B cell (primary cell): ENCODE measurements at regions of chr17 and their contacts with region 1.

Region 1: DNA sequence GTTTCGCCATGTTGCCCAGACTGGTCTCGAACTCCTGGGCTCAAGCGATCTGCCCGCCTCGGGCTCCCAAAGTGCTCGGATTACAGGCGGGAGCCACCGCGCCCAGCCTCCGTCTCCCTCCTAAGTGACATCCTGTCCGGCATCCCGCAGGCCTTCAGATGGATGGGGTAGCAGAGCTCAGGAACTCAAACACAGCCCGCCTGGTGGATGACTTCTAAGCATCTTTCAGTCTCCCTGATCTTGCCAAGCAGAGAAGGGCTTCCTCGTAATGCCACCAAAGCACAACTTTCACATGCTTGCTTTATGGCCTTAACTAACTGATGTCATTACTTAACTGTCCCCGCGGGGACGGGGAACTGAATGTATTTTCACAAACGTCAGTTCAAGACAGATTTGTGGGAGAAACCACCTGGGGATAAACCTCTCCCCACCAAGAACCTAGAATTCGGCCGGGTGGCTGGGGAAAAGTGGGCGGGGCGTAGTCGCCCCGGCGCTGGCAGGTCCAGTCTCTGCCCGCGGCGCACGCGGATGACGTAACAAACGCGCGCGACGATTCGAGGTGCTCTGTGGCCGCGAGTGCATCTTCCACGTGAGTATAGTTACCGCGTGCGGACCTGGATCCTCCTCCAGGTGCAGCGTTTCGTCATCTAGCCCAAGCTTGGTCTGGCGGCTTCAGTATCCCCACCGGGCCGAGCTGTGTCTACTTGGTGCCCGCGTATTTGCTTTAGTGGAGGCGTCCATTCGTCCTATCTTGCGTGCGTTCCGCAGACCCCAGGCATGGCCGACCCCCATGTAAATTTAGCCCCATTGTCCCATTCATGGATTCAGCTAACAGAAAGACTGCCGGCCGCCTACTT is at the start of gene PFAS:
- DNase-seq: peak; percentile 98
- ATAC-seq: peak; percentile 48
- H3K4me3 ChIP-seq: peak within 1 kb of the TSS; percentile 65 to 100 (median 78)
- H3K4me3 Mint-ChIP-seq: peak within 1 kb of the TSS; percentile 96
- H3K27ac ChIP-seq: peak within 1 kb of the TSS; percentile 99 to 100
- H3K27ac Mint-ChIP-seq: peak within 1 kb of the TSS; percentile 100
- H3K4me1 ChIP-seq: peaks cover 29 to 37% of the 10 kb centered on the region in 2 donors
- H3K4me1 Mint-ChIP-seq: peaks cover 44% of the 10 kb centered on the region
- H3K27me3 ChIP-seq: no peaks in the 10 kb centered on the region
- H3K27me3 Mint-ChIP-seq: no peaks in the 10 kb centered on the region
- CTCF ChIP-seq: no peak
- total RNA-seq, gene PFAS: 65.5 and 66.4 TPM in 2 replicates

Region 2: DNA sequence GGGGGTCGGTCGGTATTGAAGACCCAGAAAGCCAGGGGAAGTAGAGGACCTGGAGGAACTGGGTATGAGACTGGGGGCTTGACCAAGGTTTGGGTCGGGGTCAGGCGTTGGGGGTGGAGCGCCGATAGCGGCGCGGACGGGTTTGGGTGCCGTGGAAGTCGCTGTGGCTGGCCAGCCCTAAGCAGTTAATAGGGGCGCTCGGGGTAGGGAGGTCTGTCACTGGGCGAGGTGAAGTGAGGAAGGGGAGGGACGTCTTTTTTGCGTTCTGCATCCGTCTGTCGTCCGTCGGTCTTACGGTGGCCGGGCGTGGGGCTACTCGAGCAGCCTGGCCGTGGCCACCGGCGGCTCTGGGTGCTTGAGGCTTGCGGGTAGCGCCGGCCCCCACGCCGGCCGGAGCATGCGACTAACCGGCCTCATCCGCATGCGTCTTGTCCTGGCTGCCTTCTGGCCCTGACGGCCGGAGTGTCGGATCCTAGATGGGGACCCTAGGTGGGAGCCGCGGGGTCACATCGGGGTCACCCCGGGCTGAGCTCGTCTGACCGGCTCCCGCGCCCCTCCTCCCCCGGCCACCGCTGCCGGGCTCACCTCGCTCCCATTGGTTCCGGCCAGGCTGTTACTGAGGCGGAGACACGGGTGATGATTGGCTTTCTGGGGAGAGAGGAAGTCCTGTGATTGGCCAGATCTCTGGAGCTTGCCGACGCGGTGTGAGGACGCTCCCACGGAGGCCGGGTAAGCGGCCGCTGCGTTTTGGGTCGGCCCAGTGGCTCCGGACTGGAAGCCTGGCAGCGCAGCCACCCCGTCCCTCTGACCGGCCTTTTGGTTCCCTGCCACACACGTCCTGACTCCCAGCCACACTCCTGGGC is 404.5 kb before region 1 on chr17:
- CTCF ChIA-PET with region 1: no interaction called
- POLR2A ChIA-PET with region 1: no interaction called
- intact Hi-C with region 1: loop called (anchors 2 kb)
- DNase-seq: peak; percentile 93
- ATAC-seq: peak; percentile 41
- H3K4me3 ChIP-seq: peak overlapping the region; percentile 67 to 95 (median 93)
- H3K4me3 Mint-ChIP-seq: peak overlapping the region; percentile 100
- H3K27ac ChIP-seq: peak overlapping the region; percentile 100
- H3K27ac Mint-ChIP-seq: peak overlapping the region; percentile 100
- H3K4me1 ChIP-seq: peaks cover 20 to 49% of the 10 kb centered on the region in 2 donors
- H3K4me1 Mint-ChIP-seq: peaks cover 39% of the 10 kb centered on the region
- H3K27me3 ChIP-seq: no peaks in the 10 kb centered on the region
- H3K27me3 Mint-ChIP-seq: no peaks in the 10 kb centered on the region
- CTCF ChIP-seq: no peak

Region 3: DNA sequence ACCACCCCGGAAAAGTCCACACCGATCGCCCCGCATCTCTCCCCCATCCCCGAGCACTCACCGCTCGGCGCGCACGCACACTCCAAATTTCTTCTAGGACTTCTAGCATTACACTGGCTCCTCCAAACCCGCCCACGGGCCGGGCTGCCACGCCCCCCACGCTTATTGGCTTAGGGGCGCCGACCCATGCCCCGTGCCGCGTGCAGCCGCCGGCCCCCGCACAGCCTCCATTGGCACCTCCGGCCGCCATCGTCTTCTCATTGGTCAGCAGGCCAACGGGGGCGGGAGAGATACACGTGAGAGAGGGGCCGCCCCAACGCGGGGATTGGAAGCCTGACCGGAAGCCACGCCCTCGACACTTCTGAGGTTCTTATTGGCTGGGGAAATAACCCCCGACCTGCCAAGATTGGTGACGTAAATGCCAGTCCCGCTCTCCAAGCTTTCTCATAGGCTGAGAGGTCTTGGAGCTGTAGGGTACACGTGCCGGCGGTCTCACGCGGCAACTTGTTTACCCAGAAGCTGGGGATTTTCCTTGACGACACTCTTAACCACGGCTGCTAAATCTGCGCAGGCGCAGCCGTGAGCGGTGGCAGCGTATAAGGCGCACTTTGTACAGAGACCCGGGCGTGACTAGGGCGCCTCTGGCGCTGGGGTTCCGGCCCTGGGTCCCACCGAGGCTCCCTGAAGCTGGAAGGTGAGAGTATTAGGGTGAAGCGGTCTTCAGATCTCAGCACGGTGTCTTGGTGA is 92.6 kb before region 1 on chr17:
- CTCF ChIA-PET with region 1: interaction called, 5 read pairs
- POLR2A ChIA-PET with region 1: interaction called, 9 read pairs
- intact Hi-C with region 1: loop called (anchors 1 kb)
- DNase-seq: peak; percentile 100
- ATAC-seq: peak; percentile 79
- H3K4me3 ChIP-seq: peak overlapping the region; percentile 69 to 96 (median 84)
- H3K4me3 Mint-ChIP-seq: no peak overlapping the region
- H3K27ac ChIP-seq: peak overlapping the region; percentile 98 to 100
- H3K27ac Mint-ChIP-seq: no peak overlapping the region
- H3K4me1 ChIP-seq: peaks cover 59 to 85% of the 10 kb centered on the region in 2 donors
- H3K4me1 Mint-ChIP-seq: peaks cover 50% of the 10 kb centered on the region
- H3K27me3 ChIP-seq: no peaks in the 10 kb centered on the region
- H3K27me3 Mint-ChIP-seq: no peaks in the 10 kb centered on the region
- CTCF ChIP-seq: no peak

Region 4: DNA sequence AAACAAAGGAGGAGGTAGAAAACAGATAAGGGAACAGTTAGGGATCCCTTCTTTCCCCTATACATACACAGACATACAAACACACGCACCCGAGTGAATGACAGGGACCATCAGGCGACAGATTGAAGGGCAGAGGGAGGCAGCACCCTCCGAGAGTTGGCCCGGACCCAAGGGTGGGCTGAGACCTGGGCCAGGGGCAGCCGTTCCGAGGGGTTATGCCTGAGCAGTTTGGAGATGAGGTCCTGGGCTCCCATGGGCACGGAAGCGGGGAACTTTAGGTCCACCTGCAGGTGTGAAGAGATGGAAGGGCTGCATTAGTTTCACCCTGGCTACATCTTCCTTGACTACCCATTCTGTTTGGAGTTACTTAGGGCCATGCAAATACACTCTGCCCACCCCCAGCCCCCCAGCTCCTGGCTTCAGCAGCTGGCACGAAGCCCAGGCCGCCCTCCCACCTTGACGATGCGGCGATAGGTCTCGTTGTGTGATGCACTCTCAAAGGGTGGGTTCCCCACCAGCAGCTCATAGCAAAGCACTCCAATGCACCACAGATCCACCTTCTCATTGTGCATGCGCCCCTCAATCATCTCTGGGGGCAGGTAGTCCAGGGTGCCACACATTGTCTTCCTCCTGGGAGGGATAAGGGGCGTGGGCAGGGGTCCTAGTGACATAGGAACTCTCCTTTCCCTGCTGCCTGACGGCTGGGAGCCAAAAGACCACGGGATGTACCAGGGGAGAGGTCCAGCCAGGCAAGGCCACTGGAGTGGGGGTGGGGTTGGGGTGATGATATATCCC is 44.0 kb before region 1 on chr17:
- CTCF ChIA-PET with region 1: interaction called, 4 read pairs
- POLR2A ChIA-PET with region 1: interaction called, 8 read pairs
- intact Hi-C with region 1: loop called (anchors 1 kb)
- DNase-seq: no peak
- ATAC-seq: no peak
- H3K4me3 ChIP-seq: no peak overlapping the region
- H3K4me3 Mint-ChIP-seq: no peak overlapping the region
- H3K27ac ChIP-seq: no peak overlapping the region
- H3K27ac Mint-ChIP-seq: no peak overlapping the region
- H3K4me1 ChIP-seq: peaks cover 2 to 16% of the 10 kb centered on the region in 2 donors
- H3K4me1 Mint-ChIP-seq: peaks cover 7% of the 10 kb centered on the region
- H3K27me3 ChIP-seq: no peaks in the 10 kb centered on the region
- H3K27me3 Mint-ChIP-seq: no peaks in the 10 kb centered on the region
- CTCF ChIP-seq: no peak

Region 5: GRCh38 chr17:8288336-8289102 is 39.5 kb after region 1 on chr17 and contains the start of gene RANGRF:
- CTCF ChIA-PET with region 1: interaction called, 3 read pairs
- POLR2A ChIA-PET with region 1: interaction called, 24 read pairs
- intact Hi-C with region 1: loop called (anchors 1 kb)
- DNase-seq: peak; percentile 88
- ATAC-seq: peak; percentile 88
- H3K4me3 ChIP-seq: peak within 1 kb of the TSS; percentile 76 to 98 (median 86)
- H3K4me3 Mint-ChIP-seq: peak within 1 kb of the TSS; percentile 92
- H3K27ac ChIP-seq: peak within 1 kb of the TSS; percentile 92
- H3K27ac Mint-ChIP-seq: peak within 1 kb of the TSS; percentile 98
- H3K4me1 ChIP-seq: peaks cover 22 to 32% of the 10 kb centered on the region in 2 donors
- H3K4me1 Mint-ChIP-seq: peaks cover 51% of the 10 kb centered on the region
- H3K27me3 ChIP-seq: no peaks in the 10 kb centered on the region
- H3K27me3 Mint-ChIP-seq: no peaks in the 10 kb centered on the region
- CTCF ChIP-seq: no peak
- total RNA-seq, gene RANGRF: 46.8 and 48.8 TPM in 2 replicates

Region 6: GRCh38 chr17:8435245-8436168 is 186.5 kb after region 1 on chr17 and contains the start of gene NDEL1:
- CTCF ChIA-PET with region 1: no interaction called
- POLR2A ChIA-PET with region 1: no interaction called
- intact Hi-C with region 1: loop called (anchors 5 kb)
- DNase-seq: peak; percentile 98
- ATAC-seq: peak; percentile 94
- H3K4me3 ChIP-seq: peak within 1 kb of the TSS; percentile 77 to 91 (median 88)
- H3K4me3 Mint-ChIP-seq: peak within 1 kb of the TSS; percentile 98
- H3K27ac ChIP-seq: peak within 1 kb of the TSS; percentile 93 to 95
- H3K27ac Mint-ChIP-seq: peak within 1 kb of the TSS; percentile 98
- H3K4me1 ChIP-seq: peaks cover 20 to 23% of the 10 kb centered on the region in 2 donors
- H3K4me1 Mint-ChIP-seq: peaks cover 36% of the 10 kb centered on the region
- H3K27me3 ChIP-seq: no peaks in the 10 kb centered on the region
- H3K27me3 Mint-ChIP-seq: no peaks in the 10 kb centered on the region
- CTCF ChIP-seq: no peak
- total RNA-seq, gene NDEL1: 108 and 122 TPM in 2 replicates

Region 7: DNA sequence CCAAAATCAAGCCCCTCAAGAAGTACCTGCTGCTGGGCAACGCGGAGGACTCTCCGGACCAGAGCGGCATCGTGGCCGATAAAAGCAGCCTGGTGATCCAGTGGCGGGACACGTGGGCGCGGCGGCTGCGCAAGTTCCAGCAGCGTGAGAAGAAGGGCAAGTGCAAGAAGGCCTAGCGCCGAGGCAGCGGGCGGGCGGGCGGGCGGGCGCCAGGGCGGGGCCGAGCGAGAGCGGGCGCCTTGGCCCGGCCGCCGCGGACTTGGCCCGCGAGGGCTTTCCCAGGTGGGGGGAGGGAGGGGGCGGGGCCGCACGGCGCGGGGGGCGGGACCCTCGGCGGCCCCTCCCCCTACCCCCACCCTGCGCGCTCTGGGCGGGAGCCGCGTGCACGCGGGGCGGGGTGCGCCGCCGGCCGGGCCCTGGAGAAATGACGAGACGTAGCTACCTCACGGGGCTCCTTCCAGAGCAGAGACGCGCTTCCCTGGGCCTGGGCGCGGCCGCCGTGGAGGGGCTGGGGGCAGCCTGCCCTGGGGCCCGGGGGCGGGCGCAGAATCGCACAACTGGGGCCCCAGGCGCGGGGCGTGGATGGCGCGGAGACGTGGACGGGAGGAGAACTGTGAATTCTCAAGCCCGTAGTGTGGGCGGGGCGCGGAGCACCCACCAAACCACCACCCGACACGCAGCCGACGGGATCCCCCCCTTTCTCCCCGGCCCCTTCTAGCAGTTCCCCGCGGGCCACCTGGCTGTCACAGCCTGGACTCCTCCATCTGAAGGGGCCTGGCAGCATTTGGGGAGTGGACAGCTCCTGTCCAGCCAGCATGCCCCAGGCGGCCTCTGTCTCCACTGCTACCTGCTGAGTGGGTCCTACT is 991.0 kb after region 1 on chr17:
- CTCF ChIA-PET with region 1: no interaction called
- POLR2A ChIA-PET with region 1: no interaction called
- intact Hi-C with region 1: no loop called
- DNase-seq: peak; percentile 86
- ATAC-seq: peak; percentile 88
- H3K4me3 ChIP-seq: peak overlapping the region; percentile 39 to 72 (median 59)
- H3K4me3 Mint-ChIP-seq: peak overlapping the region; percentile 89
- H3K27ac ChIP-seq: peak overlapping the region in 1 of 2 donors; percentile 30
- H3K27ac Mint-ChIP-seq: peak overlapping the region; percentile 72
- H3K4me1 ChIP-seq: peaks cover 13 to 20% of the 10 kb centered on the region in 2 donors
- H3K4me1 Mint-ChIP-seq: peaks cover 24% of the 10 kb centered on the region
- H3K27me3 ChIP-seq: peaks cover 0 to 20% (median 0%) of the 10 kb centered on the region in 4 experiments
- H3K27me3 Mint-ChIP-seq: peaks cover 10% of the 10 kb centered on the region
- CTCF ChIP-seq: no peak